CD14-positive monocyte (primary cell): ENCODE measurements at regions of chr1 and their contacts with region 1.

Region 1: GRCh38 chr1:244252211-244252610 is 199.5 kb downstream of the ADSS2 start:
- DNase-seq: peak in 2 of 3 donors; percentile 34 to 64
- H3K4me3 ChIP-seq: peak overlapping the region in 1 of 3 experiments; percentile 4
- H3K4me3 Mint-ChIP-seq: no peak overlapping the region
- H3K27ac ChIP-seq: peak overlapping the region; percentile 10 to 86
- H3K27ac Mint-ChIP-seq: peak overlapping the region in 6 of 7 donors; percentile 25 to 96 (median 58)
- H3K4me1 ChIP-seq: peaks cover 56 to 59% of the 10 kb centered on the region in 2 donors
- H3K4me1 Mint-ChIP-seq: peaks cover 54% of the 10 kb centered on the region
- H3K27me3 ChIP-seq: no peaks in the 10 kb centered on the region
- H3K27me3 Mint-ChIP-seq: peaks cover 0 to 2% (median 0%) of the 10 kb centered on the region in 3 donors
- CTCF ChIP-seq: no peak

Region 2: DNA sequence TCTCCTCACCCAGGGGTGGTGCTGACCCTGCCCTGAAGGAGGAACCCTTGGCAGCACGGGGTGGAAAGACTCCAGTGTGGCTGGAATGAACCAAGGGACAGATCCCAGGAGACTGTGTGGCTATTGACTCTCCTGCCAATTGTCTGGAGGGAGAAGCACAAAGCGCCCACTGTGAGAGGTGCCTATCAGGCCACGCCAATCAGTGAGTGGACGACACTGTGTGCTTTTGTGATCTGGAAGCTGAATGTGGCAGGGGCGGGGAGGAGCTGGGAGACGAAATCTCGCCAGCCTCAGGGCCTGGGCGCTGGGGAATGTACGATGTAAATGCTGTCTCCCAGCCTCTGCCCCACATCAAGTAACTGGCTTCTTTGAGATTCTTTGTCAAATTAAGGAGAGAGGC is 34.0 kb before region 1 on chr1:
- intact Hi-C with region 1: loop called in 1 of 2 experiments (anchors 5 kb)
- DNase-seq: no peak
- H3K4me3 ChIP-seq: no peak overlapping the region
- H3K4me3 Mint-ChIP-seq: no peak overlapping the region
- H3K27ac ChIP-seq: no peak overlapping the region
- H3K27ac Mint-ChIP-seq: peak overlapping the region in 1 of 7 donors; percentile 31
- H3K4me1 ChIP-seq: peaks cover 13 to 18% of the 10 kb centered on the region in 2 donors
- H3K4me1 Mint-ChIP-seq: peaks cover 23% of the 10 kb centered on the region
- H3K27me3 ChIP-seq: no peaks in the 10 kb centered on the region
- H3K27me3 Mint-ChIP-seq: peaks cover 0 to 2% (median under 1%) of the 10 kb centered on the region in 3 donors
- CTCF ChIP-seq: no peak